ENCODE measurements at regions of chr7 and their contacts with region 1.

Region 1: GRCh38 chr7:12389089-12389700 is 14.5 kb downstream of the VWDE start:
- DNase-seq: peak; percentile 29 to 46 (median 33)
- H3K4me3 ChIP-seq: no peak overlapping the region
- H3K4me3 Mint-ChIP-seq: no peak overlapping the region
- H3K27ac ChIP-seq: no peak overlapping the region
- H3K27ac Mint-ChIP-seq: peak overlapping the region in 1 of 7 donors; percentile 2
- H3K4me1 ChIP-seq: no peaks in the 10 kb centered on the region
- H3K4me1 Mint-ChIP-seq: no peaks in the 10 kb centered on the region
- H3K27me3 ChIP-seq: no peaks in the 10 kb centered on the region
- H3K27me3 Mint-ChIP-seq: peaks cover 0 to 2% of the 10 kb centered on the region in 2 donors

Region 2: GRCh38 chr7:12067141-12067831 is 321.9 kb before region 1 on chr7:
- CTCF ChIA-PET with region 1: no interaction called
- POLR2A ChIA-PET with region 1: no interaction called
- intact Hi-C with region 1: loop called (anchors 5 kb)
- DNase-seq: peak; percentile 58 to 66 (median 63)
- H3K4me3 ChIP-seq: no peak overlapping the region
- H3K4me3 Mint-ChIP-seq: no peak overlapping the region
- H3K27ac ChIP-seq: no peak overlapping the region
- H3K27ac Mint-ChIP-seq: peak overlapping the region in 1 of 7 donors; percentile 2
- H3K4me1 ChIP-seq: no peaks in the 10 kb centered on the region
- H3K4me1 Mint-ChIP-seq: peaks cover 0 to 5% (median 3%) of the 10 kb centered on the region in 4 donors
- H3K27me3 ChIP-seq: no peaks in the 10 kb centered on the region
- H3K27me3 Mint-ChIP-seq: no peaks in the 10 kb centered on the region

Region 3: GRCh38 chr7:12094365-12094921 is 294.8 kb before region 1 on chr7:
- CTCF ChIA-PET with region 1: no interaction called
- POLR2A ChIA-PET with region 1: no interaction called
- intact Hi-C with region 1: no loop called
- DNase-seq: no peak
- H3K4me3 ChIP-seq: no peak overlapping the region
- H3K4me3 Mint-ChIP-seq: no peak overlapping the region
- H3K27ac ChIP-seq: no peak overlapping the region
- H3K27ac Mint-ChIP-seq: no peak overlapping the region
- H3K4me1 ChIP-seq: no peaks in the 10 kb centered on the region
- H3K4me1 Mint-ChIP-seq: no peaks in the 10 kb centered on the region
- H3K27me3 ChIP-seq: no peaks in the 10 kb centered on the region
- H3K27me3 Mint-ChIP-seq: no peaks in the 10 kb centered on the region

Region 4: DNA sequence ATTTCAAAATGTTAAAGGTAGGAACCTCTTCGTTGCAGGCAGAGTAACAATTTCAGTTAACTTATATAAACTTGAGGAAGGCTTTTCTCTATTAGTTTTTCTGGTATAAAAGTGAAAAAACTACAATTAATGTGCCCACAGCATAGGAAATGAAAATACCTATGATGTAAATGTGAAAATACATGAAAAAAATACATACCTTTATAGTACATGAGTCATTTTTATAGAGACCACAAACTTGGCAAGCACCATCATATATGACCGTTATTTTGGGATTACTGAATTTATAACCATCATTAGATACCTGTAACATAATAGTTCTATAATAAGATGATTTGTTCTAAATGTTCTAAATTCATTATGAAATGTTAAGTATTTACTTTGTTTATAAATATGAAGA is 28.2 kb before region 1 on chr7:
- CTCF ChIA-PET with region 1: no interaction called
- POLR2A ChIA-PET with region 1: no interaction called
- intact Hi-C with region 1: no loop called
- DNase-seq: no peak
- H3K4me3 ChIP-seq: no peak overlapping the region
- H3K4me3 Mint-ChIP-seq: no peak overlapping the region
- H3K27ac ChIP-seq: no peak overlapping the region
- H3K27ac Mint-ChIP-seq: no peak overlapping the region
- H3K4me1 ChIP-seq: no peaks in the 10 kb centered on the region
- H3K4me1 Mint-ChIP-seq: no peaks in the 10 kb centered on the region
- H3K27me3 ChIP-seq: no peaks in the 10 kb centered on the region
- H3K27me3 Mint-ChIP-seq: peaks cover 0 to 3% of the 10 kb centered on the region in 2 donors

Region 5: GRCh38 chr7:12403287-12404181 is 14.3 kb after region 1 on chr7 and contains the start of gene VWDE:
- CTCF ChIA-PET with region 1: interaction called, 4 read pairs
- POLR2A ChIA-PET with region 1: no interaction called
- intact Hi-C with region 1: loop called (anchors 1 kb)
- DNase-seq: peak; percentile 31 to 70 (median 44)
- H3K4me3 ChIP-seq: peak within 1 kb of the TSS; percentile 38 to 54
- H3K4me3 Mint-ChIP-seq: peak within 1 kb of the TSS; percentile 82 to 95 (median 90)
- H3K27ac ChIP-seq: peak within 1 kb of the TSS; percentile 29
- H3K27ac Mint-ChIP-seq: peak within 1 kb of the TSS; percentile 30 to 92 (median 82)
- H3K4me1 ChIP-seq: peaks cover 13% of the 10 kb centered on the region
- H3K4me1 Mint-ChIP-seq: peaks cover 12 to 29% (median 17%) of the 10 kb centered on the region in 4 donors
- H3K27me3 ChIP-seq: no peaks in the 10 kb centered on the region
- H3K27me3 Mint-ChIP-seq: peaks cover 6 to 7% of the 10 kb centered on the region in 2 donors
- total RNA-seq, gene VWDE: 8.9 to 9.0 TPM

Measured in CD4-positive, alpha-beta memory T cell (primary cell).